CD8-positive, alpha-beta T cell (primary cell): ENCODE measurements at regions of chr14 and their contacts with region 1.

Region 1: GRCh38 chr14:69919815-69920214 is 40.6 kb downstream of the SMOC1 start:
- DNase-seq: no peak
- ATAC-seq: no peak
- H3K4me3 ChIP-seq: no peak overlapping the region
- H3K4me3 Mint-ChIP-seq: no peak overlapping the region
- H3K27ac ChIP-seq: no peak overlapping the region
- H3K27ac Mint-ChIP-seq: no peak overlapping the region
- H3K4me1 ChIP-seq: no peaks in the 10 kb centered on the region
- H3K4me1 Mint-ChIP-seq: no peaks in the 10 kb centered on the region
- H3K27me3 ChIP-seq: no peaks in the 10 kb centered on the region
- H3K27me3 Mint-ChIP-seq: peaks cover 26% of the 10 kb centered on the region
- CTCF ChIP-seq: no peak

Region 2: DNA sequence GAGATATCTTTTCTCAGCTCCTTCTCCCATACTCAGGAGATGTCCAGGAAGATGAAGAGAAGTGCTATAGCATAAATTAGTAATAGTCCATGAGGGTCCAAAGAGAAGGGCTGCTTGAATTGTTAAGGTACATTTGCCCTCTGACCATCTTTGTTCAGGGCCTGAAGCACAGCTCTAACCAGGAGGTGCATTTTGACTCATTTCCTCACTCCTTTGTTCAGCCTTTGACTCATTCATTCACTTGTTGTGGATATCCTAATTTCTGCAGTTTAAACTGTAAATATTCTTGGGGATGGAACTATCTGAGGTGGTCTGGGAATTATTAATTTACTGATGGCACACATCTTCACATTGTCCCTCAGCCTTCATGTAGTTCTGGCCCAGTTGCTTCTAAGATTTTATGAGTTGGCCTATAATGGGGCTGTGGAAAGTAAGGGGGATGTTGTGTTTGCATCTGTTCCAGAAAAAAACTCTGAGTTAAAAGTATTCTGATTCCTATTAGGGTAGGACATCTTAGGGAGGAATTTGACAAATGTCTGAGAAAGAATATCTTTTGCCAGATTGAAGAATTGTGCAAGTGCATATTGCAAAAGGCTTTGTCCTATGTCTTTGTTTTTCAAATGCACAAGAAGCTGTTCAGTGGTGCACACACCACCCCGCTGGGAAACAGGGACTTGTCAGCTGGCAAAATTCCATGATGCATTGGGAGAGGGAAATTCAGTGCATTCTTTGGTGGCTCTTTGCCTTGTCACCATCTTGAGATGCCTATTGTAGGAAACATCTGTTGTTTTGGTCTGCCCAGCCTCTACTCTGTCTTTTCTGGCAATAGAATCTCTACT is 18.5 kb before region 1 on chr14:
- CTCF ChIA-PET with region 1: no interaction called
- POLR2A ChIA-PET with region 1: no interaction called
- intact Hi-C with region 1: no loop called
- DNase-seq: no peak
- ATAC-seq: no peak
- H3K4me3 ChIP-seq: no peak overlapping the region
- H3K4me3 Mint-ChIP-seq: no peak overlapping the region
- H3K27ac ChIP-seq: no peak overlapping the region
- H3K27ac Mint-ChIP-seq: no peak overlapping the region
- H3K4me1 ChIP-seq: no peaks in the 10 kb centered on the region
- H3K4me1 Mint-ChIP-seq: no peaks in the 10 kb centered on the region
- H3K27me3 ChIP-seq: peaks cover 3 to 5% of the 10 kb centered on the region in 2 experiments
- H3K27me3 Mint-ChIP-seq: peaks cover 16% of the 10 kb centered on the region
- CTCF ChIP-seq: no peak

Region 3: DNA sequence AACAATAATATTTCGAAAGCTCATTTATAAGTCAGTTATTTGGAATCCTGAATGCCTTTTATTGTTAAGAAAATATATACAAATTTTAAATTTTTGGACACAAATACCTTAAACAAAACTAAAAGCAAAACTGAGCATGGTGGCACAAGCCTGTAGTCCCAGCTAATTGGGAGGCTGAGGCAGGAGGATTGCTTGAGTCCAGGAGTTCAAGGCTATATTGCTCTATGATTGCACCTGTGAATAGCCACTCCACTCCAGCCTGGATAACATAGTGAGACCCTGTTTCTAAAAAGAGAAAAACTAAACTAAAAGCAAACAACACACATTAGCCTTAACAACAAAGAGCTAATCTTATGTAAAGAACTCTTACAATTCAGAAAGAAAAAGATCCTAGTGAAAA is 38.2 kb after region 1 on chr14:
- CTCF ChIA-PET with region 1: no interaction called
- POLR2A ChIA-PET with region 1: no interaction called
- intact Hi-C with region 1: loop called in 1 of 2 experiments (anchors 1 kb)
- DNase-seq: no peak
- ATAC-seq: no peak
- H3K4me3 ChIP-seq: no peak overlapping the region
- H3K4me3 Mint-ChIP-seq: no peak overlapping the region
- H3K27ac ChIP-seq: no peak overlapping the region
- H3K27ac Mint-ChIP-seq: no peak overlapping the region
- H3K4me1 ChIP-seq: no peaks in the 10 kb centered on the region
- H3K4me1 Mint-ChIP-seq: no peaks in the 10 kb centered on the region
- H3K27me3 ChIP-seq: no peaks in the 10 kb centered on the region
- H3K27me3 Mint-ChIP-seq: peaks cover 19% of the 10 kb centered on the region
- CTCF ChIP-seq: no peak